Left cardiac atrium (tissue), 4 donors: ENCODE measurements at regions of chr10 and their contacts with region 1.

Region 1: GRCh38 chr10:101840741-101841453 is 2.7 kb downstream of the KCNIP2 start:
- DNase-seq: peak; percentile 85
- ATAC-seq: peak; percentile 75 to 82

Region 2: DNA sequence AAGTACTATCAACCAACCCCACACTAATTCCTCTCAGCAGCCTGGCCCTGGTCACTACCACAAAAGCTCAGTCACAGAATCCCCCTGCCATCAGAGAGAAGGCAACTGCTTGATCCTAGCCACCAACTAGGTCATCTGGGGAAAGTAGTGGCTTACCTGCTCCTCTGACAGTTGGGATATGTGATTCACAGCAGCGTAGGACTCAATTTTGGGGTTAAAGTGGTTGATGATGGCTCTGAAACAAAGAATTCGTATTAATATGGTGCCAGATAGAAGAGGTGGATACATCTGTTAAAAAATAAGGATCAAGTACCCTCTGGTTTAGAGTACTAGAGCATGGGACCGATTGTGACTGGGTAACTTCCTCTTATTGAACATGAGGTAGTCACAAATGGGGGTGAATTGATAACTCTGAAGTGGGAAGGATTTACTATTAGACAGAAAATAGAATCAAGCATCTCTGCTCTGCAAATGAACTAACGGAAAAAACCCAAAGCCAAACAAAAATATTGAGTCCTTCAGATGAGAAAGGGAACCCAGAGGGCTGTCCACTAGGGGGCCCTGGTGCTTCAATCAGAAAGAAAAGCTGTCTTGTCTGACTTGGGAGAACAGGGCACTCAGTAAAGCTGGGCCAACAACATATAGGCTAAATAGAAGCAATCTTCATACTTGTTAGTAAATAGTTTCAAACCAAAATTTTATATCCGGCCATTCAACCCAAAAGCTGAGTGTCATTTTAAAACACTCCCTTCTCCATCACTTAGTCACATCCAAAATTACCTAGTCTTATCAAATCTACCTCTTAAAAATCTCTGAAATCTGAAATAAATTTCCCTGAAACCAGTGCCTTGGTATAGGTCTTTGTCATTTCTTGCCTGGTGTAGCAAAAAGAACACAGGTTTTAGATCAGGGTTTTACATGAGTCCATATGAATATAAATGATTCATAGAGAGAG is 48.6 kb after region 1 on chr10:
- intact Hi-C with region 1: loop called in 1 of 2 experiments (anchors 2 kb)
- DNase-seq: peak; percentile 83
- ATAC-seq: peak in 1 of 2 donors; percentile 43

Region 3: GRCh38 chr10:101968940-101969321 is 128.0 kb after region 1 on chr10:
- intact Hi-C with region 1: loop called in 1 of 2 experiments (anchors 5 kb)
- DNase-seq: no peak
- ATAC-seq: no peak

Region 4: DNA sequence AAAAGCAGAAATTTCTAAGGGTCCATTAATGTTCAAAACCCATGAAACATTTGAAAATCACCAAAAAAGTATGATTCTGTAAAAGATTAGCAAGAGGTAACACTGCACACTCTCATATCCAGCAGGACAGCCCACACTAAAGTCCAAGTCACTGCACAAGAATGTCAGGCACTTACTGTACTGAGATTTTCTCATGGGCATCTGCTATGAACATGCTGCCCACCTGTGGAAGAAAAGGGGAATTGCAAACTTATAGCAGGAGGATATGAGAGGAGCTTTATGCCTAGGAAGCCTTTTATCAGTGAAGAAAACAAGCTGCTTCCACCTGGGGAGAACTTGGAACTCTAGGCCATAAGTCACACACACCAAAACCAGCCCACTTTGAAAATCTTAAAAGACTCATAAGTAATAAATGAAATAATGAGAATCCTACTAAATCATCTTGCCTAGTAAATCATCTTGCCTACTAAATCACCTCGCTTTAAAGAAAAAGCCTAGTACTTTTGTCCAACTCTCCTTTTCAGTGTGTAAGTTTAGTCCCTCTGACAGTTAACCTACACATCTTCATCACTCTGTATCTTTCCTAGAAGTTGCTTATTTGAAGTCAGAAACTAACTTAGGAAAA is 169.0 kb after region 1 on chr10:
- intact Hi-C with region 1: loop called (anchors 2 kb)
- DNase-seq: peak; percentile 26
- ATAC-seq: peak; percentile 93 to 96

Region 5: GRCh38 chr10:102072673-102073527 is 232.0 kb after region 1 on chr10:
- intact Hi-C with region 1: loop called in 1 of 2 experiments (anchors 5 kb)
- DNase-seq: peak; percentile 82
- ATAC-seq: peak; percentile 86 to 88